ENCODE measurements at regions of chr4 and their contacts with region 1.

Region 1: DNA sequence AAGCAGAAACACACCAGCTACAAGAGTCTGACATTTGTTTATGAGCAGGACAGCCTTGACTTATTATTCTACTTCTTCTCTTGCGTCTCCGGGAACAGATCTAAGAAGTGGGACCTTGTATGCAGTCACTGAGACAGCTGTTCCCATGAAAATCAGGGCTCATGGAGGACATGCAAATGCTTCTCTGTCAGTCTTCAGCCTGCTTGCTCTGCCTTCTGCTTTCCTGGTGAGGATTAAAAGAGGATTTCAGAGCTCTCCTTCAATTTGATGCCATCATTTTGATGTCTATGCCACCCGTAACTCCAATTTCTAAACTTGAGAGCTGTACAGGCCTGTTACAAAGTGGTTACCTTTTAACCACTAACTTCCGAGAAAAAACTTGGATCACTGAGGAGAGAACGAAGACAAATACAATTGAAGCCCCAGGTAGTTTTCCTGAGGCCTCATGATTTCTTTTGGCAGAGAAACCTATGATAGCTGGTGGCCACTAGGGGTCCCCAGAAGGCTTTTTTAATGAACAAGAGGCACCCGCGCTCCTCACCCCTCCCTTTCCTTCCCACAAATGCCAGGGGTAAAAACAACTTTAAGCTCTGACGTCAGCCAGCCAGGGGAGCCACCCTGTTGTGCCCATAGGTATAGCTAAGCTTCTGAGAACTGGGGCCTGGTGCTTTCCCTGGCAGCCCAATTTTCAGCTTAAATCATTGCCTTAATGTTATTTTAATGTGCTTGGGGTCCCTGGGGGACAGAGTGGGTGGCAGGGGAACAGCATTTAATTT is 97.0 kb downstream of the DDIT4L start:
- DNase-seq: peak; percentile 56
- H3K4me3 ChIP-seq: no peak overlapping the region
- CTCF ChIP-seq: peak; percentile 64

Region 2: GRCh38 chr4:99998062-99998867 is 95.0 kb before region 1 on chr4:
- CTCF ChIA-PET with region 1: interaction called, 78 read pairs
- POLR2A ChIA-PET with region 1: no interaction called
- DNase-seq: no peak
- H3K4me3 ChIP-seq: no peak overlapping the region
- CTCF ChIP-seq: peak; percentile 7

Region 3: DNA sequence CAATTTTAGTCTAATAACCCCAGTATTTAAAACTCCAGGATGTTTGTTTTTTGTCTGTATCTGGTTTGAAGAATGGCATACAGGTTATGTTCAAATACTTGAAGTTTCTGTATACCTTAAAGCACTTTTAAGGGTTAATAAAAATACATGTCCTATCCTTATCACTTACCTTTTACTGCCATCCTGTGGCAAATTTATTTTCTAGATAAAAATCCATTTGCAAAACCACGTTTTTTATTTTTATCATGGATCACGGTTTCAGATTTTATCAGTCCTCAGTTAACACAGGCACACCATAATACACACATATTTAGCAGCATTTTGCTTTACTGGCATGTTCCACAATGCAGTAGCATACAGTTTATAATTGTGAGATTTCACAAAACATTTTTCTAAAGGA is 29.9 kb before region 1 on chr4:
- CTCF ChIA-PET with region 1: interaction called, 20 read pairs
- POLR2A ChIA-PET with region 1: no interaction called
- DNase-seq: no peak
- H3K4me3 ChIP-seq: no peak overlapping the region
- CTCF ChIP-seq: no peak

Region 4: DNA sequence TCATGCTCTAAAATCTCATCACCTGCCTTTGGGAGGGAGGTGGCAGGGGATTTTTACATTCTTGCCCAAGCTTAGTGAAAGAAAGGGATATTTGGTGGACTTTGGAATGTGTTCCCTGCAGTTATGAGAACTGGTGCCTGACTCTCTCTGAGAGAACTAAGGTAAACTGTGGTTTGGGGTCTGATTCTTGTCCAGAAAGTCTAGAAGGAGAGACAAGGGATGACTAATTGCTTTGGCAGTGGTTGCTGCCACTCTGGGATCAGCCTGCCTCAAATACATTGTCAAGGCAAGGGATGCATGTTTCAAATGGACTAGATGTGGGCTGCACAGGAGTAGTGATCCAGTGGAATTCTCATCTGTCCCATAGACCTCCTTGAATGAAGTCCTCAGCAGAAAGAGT is 18.2 kb before region 1 on chr4:
- CTCF ChIA-PET with region 1: interaction called, 14 read pairs
- POLR2A ChIA-PET with region 1: no interaction called
- DNase-seq: no peak
- H3K4me3 ChIP-seq: no peak overlapping the region
- CTCF ChIP-seq: no peak

Region 5: GRCh38 chr4:100082852-100083251 is 10.4 kb before region 1 on chr4:
- CTCF ChIA-PET with region 1: interaction called, 19 read pairs
- POLR2A ChIA-PET with region 1: no interaction called
- DNase-seq: no peak
- H3K4me3 ChIP-seq: no peak overlapping the region
- CTCF ChIP-seq: no peak

Region 6: GRCh38 chr4:100103671-100104070 is 10.4 kb after region 1 on chr4:
- CTCF ChIA-PET with region 1: interaction called, 16 read pairs
- POLR2A ChIA-PET with region 1: no interaction called
- DNase-seq: no peak
- H3K4me3 ChIP-seq: no peak overlapping the region
- CTCF ChIP-seq: no peak

Region 7: GRCh38 chr4:100117750-100118149 is 24.5 kb after region 1 on chr4:
- CTCF ChIA-PET with region 1: interaction called, 11 read pairs
- POLR2A ChIA-PET with region 1: no interaction called
- DNase-seq: no peak
- H3K4me3 ChIP-seq: no peak overlapping the region
- CTCF ChIP-seq: peak; percentile 30